Tibial artery (tissue), 4 donors: ENCODE measurements at regions of chr2 and their contacts with region 1.

Region 1: GRCh38 chr2:160109936-160110673 is 47.7 kb upstream of the PLA2R1 start:
- DNase-seq: peak; percentile 48 to 73
- H3K4me3 ChIP-seq: no peak overlapping the region
- H3K27ac ChIP-seq: no peak overlapping the region
- H3K4me1 ChIP-seq: no peaks in the 10 kb centered on the region
- H3K27me3 ChIP-seq: no peaks in the 10 kb centered on the region
- CTCF ChIP-seq: peak; percentile 78 to 82

Region 2: GRCh38 chr2:159712143-159712928 is 397.8 kb before region 1 on chr2 and contains the start of gene MARCHF7:
- intact Hi-C with region 1: no loop called
- DNase-seq: peak; percentile 94 to 99
- H3K4me3 ChIP-seq: peak within 1 kb of the TSS; percentile 79 to 85
- H3K27ac ChIP-seq: peak within 1 kb of the TSS; percentile 93 to 98
- H3K4me1 ChIP-seq: peaks cover 0 to 51% (median 32%) of the 10 kb centered on the region in 4 donors
- H3K27me3 ChIP-seq: no peaks in the 10 kb centered on the region
- CTCF ChIP-seq: peak in 1 of 2 experiments; percentile 40

Region 3: GRCh38 chr2:161063157-161063954 is 953.3 kb after region 1 on chr2:
- intact Hi-C with region 1: loop called (anchors 10 kb)
- DNase-seq: peak; percentile 80 to 87
- H3K4me3 ChIP-seq: no peak overlapping the region
- H3K27ac ChIP-seq: no peak overlapping the region
- H3K4me1 ChIP-seq: peaks cover 0 to 9% (median 3%) of the 10 kb centered on the region in 4 donors
- H3K27me3 ChIP-seq: no peaks in the 10 kb centered on the region
- CTCF ChIP-seq: peak; percentile 80 to 89